Naive thymus-derived CD4-positive, alpha-beta T cell (primary cell): ENCODE measurements at regions of chr15 and their contacts with region 1.

Region 1: DNA sequence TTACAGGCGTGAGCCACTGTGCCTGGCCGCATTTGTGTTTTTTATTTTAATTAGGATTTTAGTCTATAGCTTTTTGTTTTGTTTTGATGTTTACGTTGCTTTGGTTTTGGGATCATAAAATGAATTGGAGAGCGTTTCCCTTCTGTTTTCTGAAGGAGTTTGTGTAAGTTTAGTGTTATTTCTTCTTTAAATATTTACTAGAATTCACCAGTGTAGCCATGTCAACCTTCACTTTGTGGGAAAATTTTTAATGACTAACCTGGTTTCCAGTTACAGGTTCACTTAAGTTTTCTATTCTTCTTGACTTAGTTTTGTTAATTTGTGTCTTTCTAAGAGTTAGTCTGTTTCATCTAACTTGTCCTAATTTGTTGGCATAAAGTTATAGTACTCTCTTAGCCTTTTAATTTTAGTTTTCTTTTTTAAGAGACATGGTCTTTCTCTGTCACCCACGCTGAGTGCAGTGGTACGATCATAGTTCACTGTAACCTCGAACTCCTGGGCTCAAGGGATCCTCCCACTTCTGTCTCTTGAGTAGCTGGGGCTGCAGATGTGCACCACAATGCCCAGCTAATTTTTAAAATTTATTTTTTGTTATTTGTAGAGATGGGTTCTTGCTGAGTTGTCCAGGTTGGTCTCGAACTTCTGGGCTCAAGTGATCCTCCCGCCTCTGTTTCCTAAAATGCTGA is 61.0 kb downstream of the CHD2 start:
- DNase-seq: no peak
- ATAC-seq: no peak
- H3K4me3 ChIP-seq: no peak overlapping the region
- H3K4me3 Mint-ChIP-seq: peak overlapping the region in 1 of 10 donors; percentile 25
- H3K27ac ChIP-seq: no peak overlapping the region
- H3K27ac Mint-ChIP-seq: peak overlapping the region in 2 of 9 donors; percentile 14 to 19
- H3K4me1 ChIP-seq: peaks cover 0 to 12% of the 10 kb centered on the region in 2 donors
- H3K4me1 Mint-ChIP-seq: peaks cover 21 to 81% (median 71%) of the 10 kb centered on the region in 7 donors
- H3K27me3 ChIP-seq: no peaks in the 10 kb centered on the region
- H3K27me3 Mint-ChIP-seq: no peaks in the 10 kb centered on the region

Region 2: DNA sequence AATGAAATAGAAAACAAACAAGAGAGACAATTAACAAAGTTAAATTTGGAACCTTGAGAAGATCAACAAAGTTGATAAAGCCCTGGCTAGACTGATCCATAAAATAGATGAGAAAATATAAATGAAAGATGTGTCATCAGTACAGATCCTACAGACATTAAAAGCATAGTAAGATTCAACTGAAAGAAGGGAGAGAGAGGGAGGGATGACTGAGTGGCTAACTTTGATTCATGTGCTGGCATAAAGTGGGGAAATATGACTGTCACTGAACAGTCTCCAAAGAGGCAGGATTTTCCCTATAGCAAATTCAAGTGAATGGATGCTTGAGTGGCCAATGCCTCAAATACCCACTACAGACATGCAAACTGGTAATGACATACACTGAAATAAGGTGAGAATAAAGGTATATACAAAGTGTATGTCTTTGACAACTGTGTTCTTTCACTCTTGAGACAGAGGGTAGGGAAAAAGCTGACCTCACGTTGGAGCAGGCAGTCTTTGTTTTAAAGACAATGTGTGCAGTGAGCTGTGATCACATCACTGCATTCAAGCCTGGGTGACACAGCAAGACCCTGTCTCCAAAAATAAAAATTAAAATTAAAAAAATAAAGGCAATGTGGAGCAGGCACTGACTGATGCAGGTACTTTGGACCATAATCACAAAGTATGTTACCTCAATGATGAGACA is 96.9 kb before region 1 on chr15:
- CTCF ChIA-PET with region 1: no interaction called
- POLR2A ChIA-PET with region 1: no interaction called
- intact Hi-C with region 1: no loop called
- DNase-seq: no peak
- ATAC-seq: no peak
- H3K4me3 ChIP-seq: no peak overlapping the region
- H3K4me3 Mint-ChIP-seq: no peak overlapping the region
- H3K27ac ChIP-seq: no peak overlapping the region
- H3K27ac Mint-ChIP-seq: peak overlapping the region in 2 of 9 donors; percentile 14 to 28
- H3K4me1 ChIP-seq: no peaks in the 10 kb centered on the region
- H3K4me1 Mint-ChIP-seq: peaks cover 0 to 14% (median 2%) of the 10 kb centered on the region in 7 donors
- H3K27me3 ChIP-seq: no peaks in the 10 kb centered on the region
- H3K27me3 Mint-ChIP-seq: no peaks in the 10 kb centered on the region

Region 3: GRCh38 chr15:92924216-92924615 is 36.9 kb before region 1 on chr15:
- CTCF ChIA-PET with region 1: no interaction called
- POLR2A ChIA-PET with region 1: no interaction called
- intact Hi-C with region 1: loop called in 1 of 2 experiments (anchors 2 kb)
- DNase-seq: no peak
- ATAC-seq: no peak
- H3K4me3 ChIP-seq: no peak overlapping the region
- H3K4me3 Mint-ChIP-seq: peak overlapping the region in 8 of 10 donors; percentile 2 to 72 (median 44)
- H3K27ac ChIP-seq: no peak overlapping the region
- H3K27ac Mint-ChIP-seq: peak overlapping the region; percentile 29 to 95 (median 71)
- H3K4me1 ChIP-seq: peaks cover 35 to 39% of the 10 kb centered on the region in 2 donors
- H3K4me1 Mint-ChIP-seq: peaks cover 46 to 97% (median 90%) of the 10 kb centered on the region in 7 donors
- H3K27me3 ChIP-seq: no peaks in the 10 kb centered on the region
- H3K27me3 Mint-ChIP-seq: no peaks in the 10 kb centered on the region